Caco-2 (cell line): ENCODE measurements at regions of chr7 and their contacts with region 1.

Region 1: GRCh38 chr7:31443457-31443856 is 70.4 kb upstream of the ITPRID1 start:
- DNase-seq: peak in 1 of 2 experiments; percentile 32
- H3K4me3 ChIP-seq: no peak overlapping the region
- H3K4me3 Mint-ChIP-seq: no peak overlapping the region
- H3K27ac Mint-ChIP-seq: no peak overlapping the region
- H3K4me1 ChIP-seq: peaks cover 9% of the 10 kb centered on the region
- H3K4me1 Mint-ChIP-seq: peaks cover 29% of the 10 kb centered on the region
- H3K27me3 ChIP-seq: no peaks in the 10 kb centered on the region
- H3K27me3 Mint-ChIP-seq: no peaks in the 10 kb centered on the region
- CTCF ChIP-seq: peak; percentile 66 to 77

Region 2: DNA sequence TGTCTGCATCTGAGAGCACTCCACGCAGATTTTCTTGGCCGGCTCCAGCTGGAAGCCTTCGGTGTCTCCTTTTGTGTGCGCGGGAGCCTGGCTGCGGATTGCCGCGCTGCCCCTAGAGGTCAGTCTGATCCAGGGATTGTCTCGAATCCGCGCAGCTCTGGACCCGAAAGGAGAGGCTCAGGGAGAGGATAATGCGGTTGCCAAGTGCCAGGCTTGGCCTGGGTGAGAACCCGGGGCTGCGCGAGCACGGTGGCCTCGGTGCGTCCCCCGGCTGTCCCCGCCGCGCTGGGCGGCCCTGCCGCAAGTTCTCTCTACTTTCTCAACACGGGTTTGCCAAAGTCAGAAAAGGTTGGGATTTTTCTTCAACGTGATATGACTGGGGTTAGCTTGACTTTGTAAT is 250.5 kb before region 1 on chr7:
- CTCF ChIA-PET with region 1: interaction called, 6 read pairs
- POLR2A ChIA-PET with region 1: no interaction called
- intact Hi-C with region 1: loop called (anchors 5 kb)
- DNase-seq: peak; percentile 69
- H3K4me3 ChIP-seq: no peak overlapping the region
- H3K4me3 Mint-ChIP-seq: no peak overlapping the region
- H3K27ac Mint-ChIP-seq: no peak overlapping the region
- H3K4me1 ChIP-seq: no peaks in the 10 kb centered on the region
- H3K4me1 Mint-ChIP-seq: no peaks in the 10 kb centered on the region
- H3K27me3 ChIP-seq: no peaks in the 10 kb centered on the region
- H3K27me3 Mint-ChIP-seq: peaks cover 5% of the 10 kb centered on the region
- CTCF ChIP-seq: peak; percentile 72 to 87

Region 3: GRCh38 chr7:31488562-31489203 is 45.2 kb after region 1 on chr7:
- CTCF ChIA-PET with region 1: interaction called, 6 read pairs
- POLR2A ChIA-PET with region 1: no interaction called
- intact Hi-C with region 1: loop called (anchors 1 kb)
- DNase-seq: peak; percentile 62 to 63
- H3K4me3 ChIP-seq: no peak overlapping the region
- H3K4me3 Mint-ChIP-seq: no peak overlapping the region
- H3K27ac Mint-ChIP-seq: no peak overlapping the region
- H3K4me1 ChIP-seq: peaks cover 17% of the 10 kb centered on the region
- H3K4me1 Mint-ChIP-seq: no peaks in the 10 kb centered on the region
- H3K27me3 ChIP-seq: no peaks in the 10 kb centered on the region
- H3K27me3 Mint-ChIP-seq: no peaks in the 10 kb centered on the region
- CTCF ChIP-seq: peak; percentile 61 to 69

Region 4: GRCh38 chr7:31500656-31501055 is 57.2 kb after region 1 on chr7:
- CTCF ChIA-PET with region 1: no interaction called
- POLR2A ChIA-PET with region 1: no interaction called
- intact Hi-C with region 1: no loop called
- DNase-seq: peak in 1 of 2 experiments; percentile 12
- H3K4me3 ChIP-seq: no peak overlapping the region
- H3K4me3 Mint-ChIP-seq: peak overlapping the region; percentile 58
- H3K27ac Mint-ChIP-seq: peak overlapping the region; percentile 53
- H3K4me1 ChIP-seq: peaks cover 26% of the 10 kb centered on the region
- H3K4me1 Mint-ChIP-seq: peaks cover 26% of the 10 kb centered on the region
- H3K27me3 ChIP-seq: no peaks in the 10 kb centered on the region
- H3K27me3 Mint-ChIP-seq: no peaks in the 10 kb centered on the region
- CTCF ChIP-seq: no peak

Region 5: DNA sequence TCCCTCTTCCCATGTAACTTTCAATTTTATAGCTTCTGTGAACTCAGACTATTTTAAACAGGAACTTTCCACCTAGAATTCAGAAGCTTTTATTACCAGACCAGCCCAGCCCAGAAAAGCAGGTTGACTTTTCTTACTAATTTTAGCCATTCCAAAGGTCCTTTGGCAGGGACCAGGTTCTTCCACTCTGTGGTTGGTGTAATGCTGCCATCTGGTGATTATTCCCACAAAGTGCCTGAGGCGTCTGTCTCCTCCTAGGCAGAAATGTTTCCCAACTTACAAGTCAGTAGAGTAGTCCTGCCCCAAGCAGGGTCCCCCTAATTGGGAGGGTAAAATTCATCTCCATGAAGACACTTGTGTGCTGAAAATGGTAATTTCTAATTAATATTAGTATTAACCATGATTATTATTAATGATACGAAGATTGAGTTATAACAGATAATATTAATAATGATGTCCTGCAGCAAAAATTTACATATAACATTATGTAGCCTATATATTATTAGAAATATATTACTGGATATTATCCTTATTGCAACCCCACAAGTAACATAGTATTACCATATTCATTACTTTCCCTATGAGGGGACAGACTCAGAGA is 190.5 kb after region 1 on chr7:
- CTCF ChIA-PET with region 1: interaction called, 34 read pairs
- POLR2A ChIA-PET with region 1: no interaction called
- intact Hi-C with region 1: loop called (anchors 1 kb)
- DNase-seq: peak; percentile 73 to 77
- H3K4me3 ChIP-seq: no peak overlapping the region
- H3K4me3 Mint-ChIP-seq: no peak overlapping the region
- H3K27ac Mint-ChIP-seq: no peak overlapping the region
- H3K4me1 ChIP-seq: peaks cover 10% of the 10 kb centered on the region
- H3K4me1 Mint-ChIP-seq: peaks cover 6% of the 10 kb centered on the region
- H3K27me3 ChIP-seq: no peaks in the 10 kb centered on the region
- H3K27me3 Mint-ChIP-seq: no peaks in the 10 kb centered on the region
- CTCF ChIP-seq: peak; percentile 76 to 80